Cardiac septum (tissue), 1 donor: ENCODE measurements at regions of chr7 and their contacts with region 1.

Region 1: DNA sequence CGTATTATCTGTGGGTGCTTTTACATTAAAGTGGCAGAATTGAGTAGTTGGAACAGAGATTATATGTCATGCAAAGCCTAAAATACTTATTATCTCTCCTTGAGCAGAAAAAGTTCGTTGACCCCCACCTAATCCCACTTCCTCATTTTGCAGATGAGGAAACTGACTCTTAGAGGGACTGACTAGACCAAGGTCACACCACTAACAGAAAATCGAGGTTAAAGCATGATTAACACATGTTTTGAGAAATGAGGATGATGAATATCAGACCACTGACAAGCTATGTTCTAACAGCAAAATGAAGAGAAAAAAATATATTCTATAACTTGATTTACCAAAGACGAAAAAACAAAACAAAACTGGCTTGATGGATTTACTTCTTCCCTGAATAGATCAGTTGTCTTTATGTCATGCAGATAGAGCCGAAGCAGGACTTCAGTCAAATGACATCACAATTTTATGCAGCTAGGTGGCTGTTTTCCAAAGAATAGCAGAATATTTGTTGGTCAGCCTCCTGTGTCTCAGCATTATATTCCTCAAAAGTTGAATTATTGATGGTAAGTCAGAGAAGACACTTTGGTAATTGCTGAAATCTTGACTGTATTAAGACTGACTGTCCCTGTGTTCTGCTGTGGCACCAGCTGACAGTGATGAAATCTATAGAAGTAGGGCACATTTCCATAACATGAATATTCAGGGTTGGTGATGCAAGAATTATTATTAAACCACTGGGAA is 24.2 kb upstream of the SMIM30 start:
- DNase-seq: no peak

Region 2: GRCh38 chr7:112833082-112833481 is 309.5 kb before region 1 on chr7:
- intact Hi-C with region 1: no loop called
- DNase-seq: no peak

Region 3: GRCh38 chr7:112843151-112843550 is 299.4 kb before region 1 on chr7:
- intact Hi-C with region 1: no loop called
- DNase-seq: no peak

Region 4: DNA sequence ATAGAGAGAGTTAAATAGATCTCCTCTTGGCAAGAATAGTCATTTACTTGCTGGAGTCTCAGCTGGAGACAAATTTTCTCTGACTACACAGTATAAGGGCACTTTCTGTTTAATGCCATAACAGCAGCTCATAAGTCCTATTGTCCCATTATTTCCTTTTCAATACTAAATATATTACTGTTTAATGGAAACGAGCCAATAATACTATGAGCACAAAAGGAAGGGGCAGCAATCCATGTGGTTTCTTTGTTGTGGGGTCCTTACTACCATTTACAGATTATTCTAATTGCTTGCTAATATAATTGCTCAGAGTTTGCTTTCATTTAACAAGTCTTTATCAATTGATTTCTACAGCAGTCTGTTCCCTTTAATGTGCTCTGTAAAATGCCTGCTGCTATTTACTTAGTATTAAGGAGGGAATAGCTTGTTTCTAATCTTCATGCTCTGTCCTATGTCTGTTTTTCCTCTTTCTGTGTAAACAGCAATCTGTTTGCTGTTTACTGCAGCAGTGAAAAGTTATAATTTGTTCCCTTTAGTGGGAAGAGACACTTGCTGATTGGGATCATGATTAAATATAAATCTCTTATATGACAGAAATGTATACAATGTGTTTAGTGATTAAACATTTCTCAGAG is 272.0 kb after region 1 on chr7:
- intact Hi-C with region 1: loop called (anchors 10 kb)
- DNase-seq: no peak